HepG2 (cell line): ENCODE measurements at regions of chr7 and their contacts with region 1.

Region 1: DNA sequence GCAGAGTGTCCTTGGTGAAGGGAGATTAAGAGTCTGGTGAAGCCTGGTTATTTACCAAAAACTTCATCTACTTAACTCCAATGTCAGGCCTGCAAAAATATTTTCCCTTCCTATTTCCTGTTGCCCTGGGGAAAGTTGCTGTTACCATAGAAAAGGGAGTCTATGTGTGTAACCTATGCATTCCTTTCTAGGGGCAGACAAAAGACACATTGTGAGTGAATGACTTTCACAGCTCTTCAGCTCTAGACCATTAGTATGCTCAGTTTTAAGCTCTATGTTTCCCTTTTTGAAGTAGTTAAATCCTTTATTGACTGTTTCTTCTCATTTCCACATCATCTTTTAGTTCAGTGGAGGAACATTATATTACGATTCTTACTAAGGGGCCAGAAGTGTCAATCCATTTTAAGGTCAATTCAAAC is 45.6 kb upstream of the SGCE start:
- DNase-seq: peak; percentile 99
- ATAC-seq: peak; percentile 99
- H3K4me3 ChIP-seq: peak overlapping the region in 2 of 3 experiments; percentile 13 to 31; a peak in 2 of 6 replicates
- H3K27ac ChIP-seq: peak overlapping the region; percentile 100
- H3K4me1 ChIP-seq: peaks cover 67% of the 10 kb centered on the region
- H3K27me3 ChIP-seq: no peaks in the 10 kb centered on the region
- CTCF ChIP-seq: no peak
- EP300 ChIP-seq: peak; percentile 94 to 96
- POLR2A ChIP-seq: no peak
- RAD21 ChIP-seq: no peak

Region 2: GRCh38 chr7:93765475-93765874 is 936.1 kb before region 1 on chr7:
- CTCF ChIA-PET with region 1: no interaction called
- POLR2A ChIA-PET with region 1: no interaction called
- in situ Hi-C with region 1: no loop called
- intact Hi-C with region 1: no loop called
- DNase-seq: no peak
- ATAC-seq: no peak
- H3K4me3 ChIP-seq: no peak overlapping the region
- H3K27ac ChIP-seq: no peak overlapping the region
- H3K4me1 ChIP-seq: no peaks in the 10 kb centered on the region
- H3K27me3 ChIP-seq: no peaks in the 10 kb centered on the region
- CTCF ChIP-seq: no peak
- EP300 ChIP-seq: no peak
- POLR2A ChIP-seq: no peak
- RAD21 ChIP-seq: no peak

Region 3: GRCh38 chr7:94561841-94562514 is 139.6 kb before region 1 on chr7:
- CTCF ChIA-PET with region 1: no interaction called
- POLR2A ChIA-PET with region 1: no interaction called
- in situ Hi-C with region 1: no loop called
- intact Hi-C with region 1: loop called (anchors 5 kb)
- DNase-seq: peak; percentile 97
- ATAC-seq: peak; percentile 95
- H3K4me3 ChIP-seq: no peak overlapping the region
- H3K27ac ChIP-seq: peak overlapping the region; percentile 73
- H3K4me1 ChIP-seq: peaks cover 41% of the 10 kb centered on the region
- H3K27me3 ChIP-seq: no peaks in the 10 kb centered on the region
- CTCF ChIP-seq: no peak
- EP300 ChIP-seq: peak; percentile 45 to 97; a peak in 2 of 4 replicates
- POLR2A ChIP-seq: no peak
- RAD21 ChIP-seq: no peak

Region 4: DNA sequence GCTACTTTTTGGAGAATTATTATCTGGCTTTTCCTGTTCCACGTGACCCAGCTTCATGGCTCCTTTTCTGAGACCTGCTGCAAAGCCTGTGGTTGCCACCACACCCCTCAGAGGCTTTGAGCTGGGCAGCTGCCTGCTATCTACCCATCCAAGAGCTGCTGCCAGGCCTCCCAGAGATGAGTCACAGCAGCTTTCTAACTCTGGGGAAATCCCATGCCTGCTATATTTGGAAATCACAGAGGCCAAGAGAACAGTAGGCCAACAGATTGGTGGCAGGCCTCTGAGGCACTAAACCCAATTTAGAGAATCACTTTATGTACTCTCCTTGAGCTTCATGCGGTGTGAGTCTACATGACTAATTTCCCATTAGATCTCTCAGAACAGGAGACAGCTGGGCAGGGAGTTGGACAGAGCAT is 80.9 kb before region 1 on chr7:
- CTCF ChIA-PET with region 1: no interaction called
- POLR2A ChIA-PET with region 1: interaction called, 4 read pairs
- in situ Hi-C with region 1: no loop called
- intact Hi-C with region 1: loop called (anchors 5 kb)
- DNase-seq: peak; percentile 82
- ATAC-seq: peak; percentile 94
- H3K4me3 ChIP-seq: no peak overlapping the region
- H3K27ac ChIP-seq: peak overlapping the region; percentile 30
- H3K4me1 ChIP-seq: peaks cover 48% of the 10 kb centered on the region
- H3K27me3 ChIP-seq: no peaks in the 10 kb centered on the region
- CTCF ChIP-seq: no peak
- EP300 ChIP-seq: peak in 1 of 2 experiments; percentile 61; a peak in 1 of 4 replicates
- POLR2A ChIP-seq: no peak
- RAD21 ChIP-seq: no peak

Region 5: GRCh38 chr7:94650162-94651051 is 51.2 kb before region 1 on chr7:
- CTCF ChIA-PET with region 1: no interaction called
- POLR2A ChIA-PET with region 1: interaction called, 4 read pairs
- in situ Hi-C with region 1: no loop called
- intact Hi-C with region 1: loop called (anchors 5 kb)
- DNase-seq: peak; percentile 87
- ATAC-seq: peak; percentile 94
- H3K4me3 ChIP-seq: peak overlapping the region in 2 of 3 experiments; percentile 14 to 45; a peak in 1 of 6 replicates
- H3K27ac ChIP-seq: peak overlapping the region; percentile 78
- H3K4me1 ChIP-seq: peaks cover 77% of the 10 kb centered on the region
- H3K27me3 ChIP-seq: no peaks in the 10 kb centered on the region
- CTCF ChIP-seq: no peak
- EP300 ChIP-seq: peak in 1 of 2 experiments; percentile 91; a peak in 2 of 4 replicates
- POLR2A ChIP-seq: no peak
- RAD21 ChIP-seq: no peak

Region 6: GRCh38 chr7:94666879-94667587 is 34.5 kb before region 1 on chr7:
- CTCF ChIA-PET with region 1: no interaction called
- POLR2A ChIA-PET with region 1: no interaction called
- in situ Hi-C with region 1: no loop called
- intact Hi-C with region 1: no loop called
- DNase-seq: no peak
- ATAC-seq: no peak
- H3K4me3 ChIP-seq: no peak overlapping the region
- H3K27ac ChIP-seq: no peak overlapping the region
- H3K4me1 ChIP-seq: peaks cover 24% of the 10 kb centered on the region
- H3K27me3 ChIP-seq: no peaks in the 10 kb centered on the region
- CTCF ChIP-seq: no peak
- EP300 ChIP-seq: no peak
- POLR2A ChIP-seq: peak in 1 of 2 experiments; percentile 51; a peak in 1 of 4 replicates
- RAD21 ChIP-seq: no peak